HEK293T (cell line): ENCODE measurements at regions of chr2 and their contacts with region 1.

Region 1: GRCh38 chr2:130797493-130798435 is 39.0 kb upstream of the ARHGEF4 start:
- DNase-seq: peak; percentile 90

Region 2: DNA sequence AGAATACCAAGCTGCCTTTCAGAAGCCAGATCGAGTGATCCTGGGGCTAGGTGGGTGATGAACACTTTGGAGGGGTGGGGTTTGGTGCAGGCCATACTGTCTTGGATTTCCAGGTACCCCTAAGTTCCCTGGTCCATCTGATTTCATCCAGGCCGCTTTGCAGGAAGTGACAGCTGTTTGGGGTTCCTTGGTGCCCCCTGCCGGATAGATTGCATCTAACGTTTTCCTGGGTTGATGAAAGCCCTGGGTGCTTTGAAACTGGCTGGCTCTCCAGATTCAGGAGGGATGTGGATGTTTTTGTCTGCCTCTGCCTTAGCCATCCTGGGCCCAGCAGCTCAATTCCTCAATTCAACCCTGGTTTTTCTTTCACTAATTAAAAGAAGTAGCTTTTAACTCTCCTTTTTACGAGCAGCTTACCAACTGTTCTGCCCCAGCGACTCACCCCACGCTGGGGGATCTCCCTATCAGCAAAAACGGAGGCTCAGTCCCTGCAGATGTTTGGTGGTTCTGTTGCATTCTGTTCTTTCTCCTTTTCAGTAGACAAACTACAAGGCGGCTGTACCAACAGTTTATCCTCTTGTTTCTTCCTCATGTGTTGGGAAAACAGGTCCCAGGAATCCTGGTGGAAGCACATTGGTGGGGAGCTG is 76.1 kb after region 1 on chr2:
- CTCF ChIA-PET with region 1: interaction called, 10 read pairs
- POLR2A ChIA-PET with region 1: interaction called, 6 read pairs
- DNase-seq: peak; percentile 66

Region 3: GRCh38 chr2:130920415-130921163 is 122.8 kb after region 1 on chr2:
- CTCF ChIA-PET with region 1: interaction called, 12 read pairs
- POLR2A ChIA-PET with region 1: no interaction called
- DNase-seq: peak; percentile 78